ENCODE measurements at regions of chrX and their contacts with region 1.

Region 1: DNA sequence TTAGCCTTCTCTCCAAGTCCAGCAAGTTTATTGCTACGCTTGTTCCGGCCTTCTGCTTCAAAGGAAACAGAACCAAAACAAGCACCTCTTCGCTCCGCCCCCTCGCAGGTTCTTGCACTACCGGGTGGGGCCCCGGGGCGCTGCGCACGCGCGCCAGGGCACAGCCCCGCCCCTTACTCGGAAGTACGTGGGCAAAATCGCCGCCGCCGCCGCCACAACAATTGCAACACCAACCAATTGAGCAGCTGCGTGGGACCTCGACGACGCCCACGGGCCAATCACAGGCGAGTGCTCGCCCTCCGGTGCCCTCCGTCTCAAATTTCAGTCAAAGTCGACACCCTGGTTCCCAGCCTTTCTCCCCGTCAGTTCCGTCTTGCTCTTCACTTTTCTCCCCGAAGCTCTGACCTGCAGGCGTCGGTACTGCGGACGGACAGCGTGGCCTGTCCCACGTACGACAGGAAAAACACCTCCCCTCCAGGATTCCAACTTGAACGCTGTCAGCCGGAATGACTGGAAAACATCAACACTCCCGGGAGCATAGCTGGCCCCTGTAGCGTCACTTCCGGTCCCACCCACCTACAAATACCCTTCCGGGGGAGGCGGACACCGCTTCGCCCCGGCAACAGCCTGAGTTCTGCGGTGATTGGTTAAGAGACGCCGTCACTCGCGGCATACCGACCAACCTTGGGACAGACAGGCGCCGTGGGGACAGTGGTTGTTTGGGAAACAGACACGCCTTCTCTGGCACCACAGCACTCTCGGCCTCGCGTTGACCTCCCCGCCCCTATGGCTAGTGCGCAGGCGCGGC is 624 bp upstream of the OTUD5 start:
- DNase-seq: peak; percentile 97

Region 2: GRCh38 chrX:48848847-48849246 is 109.2 kb before region 1 on chrX:
- intact Hi-C with region 1: no loop called
- DNase-seq: no peak

Region 3: GRCh38 chrX:48917139-48918001 is 40.7 kb before region 1 on chrX:
- intact Hi-C with region 1: loop called (anchors 5 kb)
- DNase-seq: peak; percentile 94

Region 4: DNA sequence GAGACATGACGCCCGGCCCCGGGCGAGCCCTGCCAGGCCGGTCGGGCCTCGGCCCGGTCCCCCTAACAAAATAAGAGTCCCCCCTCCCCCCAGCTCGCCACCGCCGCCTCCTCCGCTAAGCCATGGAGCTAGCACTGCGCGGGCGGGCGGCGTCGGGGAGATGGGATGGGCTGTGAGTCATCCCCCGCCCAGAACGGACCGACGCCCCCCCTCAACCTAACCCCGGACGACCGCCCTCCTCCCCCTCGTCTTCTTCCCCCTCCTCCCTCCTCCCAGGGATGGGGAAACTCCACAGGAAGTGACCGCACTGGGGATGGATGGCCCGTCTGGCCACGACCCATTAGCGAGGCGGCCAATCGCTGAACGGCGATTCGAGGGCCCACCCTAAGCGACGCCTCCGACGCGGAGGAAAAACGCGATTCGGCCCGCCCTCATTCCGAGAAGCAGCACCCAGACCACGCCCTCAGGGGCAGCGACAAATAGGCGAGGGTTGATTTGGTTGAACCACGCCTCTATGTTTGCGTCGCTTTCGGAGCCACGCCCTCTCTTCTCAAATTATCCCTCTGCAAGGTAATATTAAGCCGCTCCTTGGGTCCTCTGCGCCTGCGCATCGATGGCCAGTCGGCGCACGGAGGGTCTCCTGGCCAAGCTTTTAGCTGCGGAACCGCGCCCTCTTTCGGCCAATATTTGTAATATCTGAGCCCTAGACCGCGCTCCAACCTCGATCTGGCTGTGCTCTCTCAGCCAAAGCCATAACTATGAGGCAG is 85.4 kb after region 1 on chrX and contains the start of gene TFE3:
- intact Hi-C with region 1: loop called (anchors 5 kb)
- DNase-seq: peak; percentile 98
- total RNA-seq, gene TFE3: 21.9 TPM

Measured in cardiac septum (tissue), 1 donor.